BJ (cell line): ENCODE measurements at regions of chr7 and their contacts with region 1.

Region 1: DNA sequence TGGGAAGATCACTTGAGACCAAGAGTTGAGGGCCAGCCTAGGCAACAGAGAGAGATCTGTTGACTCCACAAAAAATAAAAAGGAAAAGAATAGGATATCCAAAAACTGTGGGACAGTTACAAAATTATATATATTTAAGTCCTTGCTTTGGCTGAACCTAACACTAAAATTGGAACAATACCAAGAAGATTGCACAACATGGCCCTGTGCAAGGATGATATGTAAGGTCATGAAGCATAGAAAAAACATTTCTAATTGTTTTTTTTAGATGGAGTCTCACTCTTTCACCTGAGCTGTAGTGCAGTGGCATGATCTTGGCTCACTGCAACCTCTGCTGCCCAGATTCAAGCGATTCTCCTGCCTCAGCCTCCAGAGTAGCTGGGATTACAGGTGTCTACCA is 139.0 kb downstream of the TPST1 start:
- DNase-seq: no peak
- H3K4me3 ChIP-seq: no peak overlapping the region
- H3K27me3 ChIP-seq: no peaks in the 10 kb centered on the region
- CTCF ChIP-seq: no peak

Region 2: DNA sequence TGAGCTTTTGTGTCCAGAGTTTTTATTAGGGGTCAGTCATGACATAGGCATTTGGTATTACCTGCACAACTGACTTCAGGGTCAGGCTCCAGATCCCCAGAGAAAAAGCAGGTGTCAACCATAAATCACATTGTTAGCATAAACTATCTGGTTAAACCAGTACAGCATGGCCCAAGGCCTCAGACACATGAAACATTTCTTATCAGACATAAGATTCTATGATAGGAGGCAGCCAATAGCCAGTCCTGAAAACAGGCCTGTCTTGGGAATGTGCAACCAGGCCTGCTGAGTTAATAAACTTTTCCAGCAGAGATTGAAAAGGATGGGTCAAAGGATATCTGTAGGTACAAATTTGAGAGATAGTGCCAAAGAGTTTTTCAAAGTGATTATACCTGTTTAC is 22.9 kb before region 1 on chr7:
- CTCF ChIA-PET with region 1: no interaction called
- POLR2A ChIA-PET with region 1: no interaction called
- DNase-seq: no peak
- H3K4me3 ChIP-seq: no peak overlapping the region
- H3K27me3 ChIP-seq: no peaks in the 10 kb centered on the region
- CTCF ChIP-seq: no peak

Region 3: DNA sequence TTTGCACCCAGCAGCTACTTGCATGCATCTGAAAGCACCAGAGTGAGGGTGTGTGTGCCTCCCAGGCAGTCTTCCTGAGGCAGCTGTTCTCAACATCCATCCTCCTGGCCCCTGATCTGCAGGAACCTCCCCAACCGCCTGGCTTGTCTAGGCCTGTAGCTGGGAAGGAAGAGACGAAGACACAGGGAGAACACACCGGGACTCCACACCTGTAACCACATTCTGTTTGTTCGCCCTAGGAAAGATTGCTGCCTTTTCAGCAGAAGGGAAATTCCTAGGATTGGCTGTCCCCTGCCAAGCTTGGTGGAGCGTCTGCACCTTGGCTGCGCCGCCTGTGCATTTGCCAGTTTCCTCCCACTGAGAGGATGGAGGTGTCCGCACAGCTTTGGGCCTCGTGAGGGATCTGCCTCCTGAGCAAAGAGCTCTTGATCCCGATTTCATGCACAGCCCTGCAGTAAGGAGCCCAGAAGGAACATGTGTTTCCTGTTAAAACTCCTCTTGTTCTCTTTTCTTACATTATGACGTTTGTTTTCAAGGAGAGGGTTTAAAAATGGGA is 15.6 kb after region 1 on chr7:
- CTCF ChIA-PET with region 1: no interaction called
- POLR2A ChIA-PET with region 1: interaction called, 13 read pairs
- DNase-seq: no peak
- H3K4me3 ChIP-seq: no peak overlapping the region
- H3K27me3 ChIP-seq: no peaks in the 10 kb centered on the region
- CTCF ChIP-seq: no peak